ENCODE measurements at regions of chr1 and their contacts with region 1.

Region 1: GRCh38 chr1:203625628-203626019 is 1.0 kb upstream of the ATP2B4 start:
- DNase-seq: peak; percentile 33 to 88 (median 67)
- ATAC-seq: peak; percentile 61 to 72 (median 62)
- H3K4me3 ChIP-seq: peak overlapping the region; percentile 12 to 67
- H3K4me3 Mint-ChIP-seq: peak overlapping the region; percentile 91 to 99 (median 92)
- H3K27ac ChIP-seq: peak overlapping the region; percentile 87
- H3K27ac Mint-ChIP-seq: peak overlapping the region; percentile 40 to 91
- H3K4me1 ChIP-seq: peaks cover 22 to 39% of the 10 kb centered on the region in 2 experiments
- H3K4me1 Mint-ChIP-seq: peaks cover 31 to 50% (median 39%) of the 10 kb centered on the region in 3 donors
- H3K27me3 ChIP-seq: no peaks in the 10 kb centered on the region
- H3K27me3 Mint-ChIP-seq: no peaks in the 10 kb centered on the region

Region 2: GRCh38 chr1:203504397-203505250 is 121.0 kb before region 1 on chr1:
- CTCF ChIA-PET with region 1: interaction called, 3 to 14 read pairs
- POLR2A ChIA-PET with region 1: no interaction called
- DNase-seq: peak; percentile 31 to 84 (median 65)
- ATAC-seq: peak; percentile 50 to 82 (median 66)
- H3K4me3 ChIP-seq: no peak overlapping the region
- H3K4me3 Mint-ChIP-seq: no peak overlapping the region
- H3K27ac ChIP-seq: no peak overlapping the region
- H3K27ac Mint-ChIP-seq: no peak overlapping the region
- H3K4me1 ChIP-seq: peaks cover 0 to 2% of the 10 kb centered on the region in 2 experiments
- H3K4me1 Mint-ChIP-seq: peaks cover 2 to 7% (median 5%) of the 10 kb centered on the region in 3 donors
- H3K27me3 ChIP-seq: peaks cover 0 to 5% of the 10 kb centered on the region in 2 experiments
- H3K27me3 Mint-ChIP-seq: peaks cover 0 to 3% of the 10 kb centered on the region in 2 donors

Region 3: GRCh38 chr1:203649999-203650855 is 24.6 kb after region 1 on chr1:
- CTCF ChIA-PET with region 1: interaction called in 1 of 2 experiments, 53 read pairs
- POLR2A ChIA-PET with region 1: interaction called, 3 to 24 read pairs
- DNase-seq: peak in 34 of 35 experiments; percentile 10 to 81 (median 52)
- ATAC-seq: peak; percentile 65 to 82 (median 78)
- H3K4me3 ChIP-seq: peak overlapping the region; percentile 43 to 46
- H3K4me3 Mint-ChIP-seq: peak overlapping the region; percentile 71 to 83 (median 81)
- H3K27ac ChIP-seq: peak overlapping the region; percentile 89
- H3K27ac Mint-ChIP-seq: peak overlapping the region; percentile 93 to 95
- H3K4me1 ChIP-seq: peaks cover 40 to 82% of the 10 kb centered on the region in 2 experiments
- H3K4me1 Mint-ChIP-seq: peaks cover 68 to 84% (median 77%) of the 10 kb centered on the region in 3 donors
- H3K27me3 ChIP-seq: no peaks in the 10 kb centered on the region
- H3K27me3 Mint-ChIP-seq: no peaks in the 10 kb centered on the region

Region 4: DNA sequence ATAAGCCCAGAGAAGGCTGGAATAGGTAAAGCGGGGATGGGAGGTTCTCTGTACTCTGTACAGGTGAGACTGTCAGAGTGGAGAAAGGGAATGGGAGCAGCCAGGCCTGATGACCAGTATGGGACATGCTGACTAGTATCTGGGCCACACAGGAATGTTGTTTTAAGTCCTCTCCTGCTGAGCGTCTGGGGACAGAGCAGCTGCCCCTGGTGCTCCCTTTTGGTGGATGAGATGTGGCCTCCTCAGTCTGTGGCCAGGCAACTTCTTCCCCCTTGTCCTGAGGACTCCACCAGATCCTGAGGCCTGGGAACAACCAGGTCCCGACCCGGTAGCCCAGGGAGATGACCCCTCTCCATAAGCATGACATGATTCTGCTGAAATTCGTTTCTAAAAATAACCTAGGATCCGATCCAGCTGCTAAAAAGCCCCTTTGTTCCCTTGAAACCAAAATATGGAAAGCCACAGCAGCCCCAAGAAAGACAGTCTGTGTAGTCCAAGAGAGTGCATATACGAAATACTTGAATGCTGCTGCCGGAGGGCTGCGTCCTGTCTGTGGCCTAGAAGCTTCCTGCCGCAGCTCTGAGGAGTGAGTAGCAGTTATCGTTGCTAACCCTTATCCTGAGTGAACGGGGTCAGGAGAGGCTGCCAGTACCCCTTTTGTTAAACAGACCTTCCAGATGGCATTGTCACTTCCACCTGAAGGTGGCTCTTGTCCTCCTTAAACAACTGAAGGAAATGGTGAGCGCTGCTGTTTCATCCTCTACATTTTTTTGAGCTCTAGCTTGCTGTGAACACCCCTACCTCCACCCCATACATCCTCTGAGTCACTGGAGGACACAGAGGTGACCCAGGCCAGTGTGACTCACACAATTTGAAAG is 48.2 kb after region 1 on chr1:
- CTCF ChIA-PET with region 1: interaction called, 4 to 46 read pairs
- POLR2A ChIA-PET with region 1: interaction called, 3 to 11 read pairs
- DNase-seq: peak; percentile 41 to 90 (median 75)
- ATAC-seq: peak; percentile 87 to 93 (median 91)
- H3K4me3 ChIP-seq: no peak overlapping the region
- H3K4me3 Mint-ChIP-seq: peak overlapping the region; percentile 64 to 72 (median 64)
- H3K27ac ChIP-seq: peak overlapping the region; percentile 77
- H3K27ac Mint-ChIP-seq: peak overlapping the region; percentile 98 to 100
- H3K4me1 ChIP-seq: peaks cover 49 to 81% of the 10 kb centered on the region in 2 experiments
- H3K4me1 Mint-ChIP-seq: peaks cover 65 to 85% (median 75%) of the 10 kb centered on the region in 3 donors
- H3K27me3 ChIP-seq: no peaks in the 10 kb centered on the region
- H3K27me3 Mint-ChIP-seq: no peaks in the 10 kb centered on the region

Region 5: GRCh38 chr1:203692565-203693470 is 67.2 kb after region 1 on chr1:
- CTCF ChIA-PET with region 1: interaction called in 1 of 2 experiments, 14 read pairs
- POLR2A ChIA-PET with region 1: interaction called in 1 of 2 experiments, 8 read pairs
- DNase-seq: no peak
- ATAC-seq: peak in 3 of 4 experiments; percentile 40 to 49 (median 41)
- H3K4me3 ChIP-seq: no peak overlapping the region
- H3K4me3 Mint-ChIP-seq: peak overlapping the region; percentile 25 to 55 (median 31)
- H3K27ac ChIP-seq: peak overlapping the region; percentile 43
- H3K27ac Mint-ChIP-seq: peak overlapping the region; percentile 76 to 84
- H3K4me1 ChIP-seq: peaks cover 2 to 43% of the 10 kb centered on the region in 2 experiments
- H3K4me1 Mint-ChIP-seq: peaks cover 25 to 76% (median 70%) of the 10 kb centered on the region in 3 donors
- H3K27me3 ChIP-seq: no peaks in the 10 kb centered on the region
- H3K27me3 Mint-ChIP-seq: no peaks in the 10 kb centered on the region

Region 6: DNA sequence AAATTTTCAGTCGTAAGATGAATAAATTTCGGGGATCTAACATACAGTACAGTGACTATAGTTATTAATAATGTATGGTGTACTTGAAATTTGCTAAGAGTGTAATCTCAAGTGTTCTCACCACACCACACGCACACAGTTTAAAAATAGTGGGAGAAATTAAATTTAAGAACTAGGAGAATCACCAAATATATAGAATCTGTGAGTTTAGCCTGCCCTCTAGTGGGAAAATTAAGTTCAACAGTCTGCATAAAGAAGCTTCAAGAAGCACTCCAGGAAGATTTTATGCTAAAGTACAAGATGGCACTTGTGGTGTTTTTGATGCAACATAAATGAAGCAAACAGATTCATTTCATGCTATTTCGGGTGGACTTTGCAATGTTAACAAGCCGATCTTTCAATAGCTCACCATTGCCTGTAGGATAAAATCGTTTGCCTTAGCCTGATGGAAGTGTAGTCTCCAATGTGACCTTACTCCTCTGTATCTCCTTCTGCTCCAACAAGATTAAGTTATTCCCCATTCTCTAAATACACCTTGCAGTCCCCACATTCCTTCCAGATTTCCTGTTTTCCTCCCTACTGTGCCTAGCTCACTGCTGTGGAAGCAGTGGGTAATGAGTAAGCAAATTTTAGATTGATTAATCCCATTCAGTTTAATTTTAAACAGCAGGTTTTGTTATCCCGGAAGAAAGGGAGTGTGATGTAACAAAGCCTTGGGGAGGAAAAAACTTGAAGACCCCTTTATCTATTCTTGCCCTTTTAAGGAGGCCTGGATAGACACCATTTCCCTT is 877.7 kb after region 1 on chr1:
- CTCF ChIA-PET with region 1: no interaction called
- POLR2A ChIA-PET with region 1: no interaction called
- DNase-seq: peak in 5 of 35 experiments; percentile 28 to 87 (median 49)
- ATAC-seq: peak in 1 of 4 experiments; percentile 20
- H3K4me3 ChIP-seq: no peak overlapping the region
- H3K4me3 Mint-ChIP-seq: peak overlapping the region in 1 of 3 donors; percentile 1
- H3K27ac ChIP-seq: no peak overlapping the region
- H3K27ac Mint-ChIP-seq: peak overlapping the region in 1 of 2 donors; percentile 9
- H3K4me1 ChIP-seq: peaks cover 11 to 13% of the 10 kb centered on the region in 2 experiments
- H3K4me1 Mint-ChIP-seq: peaks cover 33 to 50% (median 34%) of the 10 kb centered on the region in 3 donors
- H3K27me3 ChIP-seq: no peaks in the 10 kb centered on the region
- H3K27me3 Mint-ChIP-seq: peaks cover 0 to 4% of the 10 kb centered on the region in 2 donors

Region 7: DNA sequence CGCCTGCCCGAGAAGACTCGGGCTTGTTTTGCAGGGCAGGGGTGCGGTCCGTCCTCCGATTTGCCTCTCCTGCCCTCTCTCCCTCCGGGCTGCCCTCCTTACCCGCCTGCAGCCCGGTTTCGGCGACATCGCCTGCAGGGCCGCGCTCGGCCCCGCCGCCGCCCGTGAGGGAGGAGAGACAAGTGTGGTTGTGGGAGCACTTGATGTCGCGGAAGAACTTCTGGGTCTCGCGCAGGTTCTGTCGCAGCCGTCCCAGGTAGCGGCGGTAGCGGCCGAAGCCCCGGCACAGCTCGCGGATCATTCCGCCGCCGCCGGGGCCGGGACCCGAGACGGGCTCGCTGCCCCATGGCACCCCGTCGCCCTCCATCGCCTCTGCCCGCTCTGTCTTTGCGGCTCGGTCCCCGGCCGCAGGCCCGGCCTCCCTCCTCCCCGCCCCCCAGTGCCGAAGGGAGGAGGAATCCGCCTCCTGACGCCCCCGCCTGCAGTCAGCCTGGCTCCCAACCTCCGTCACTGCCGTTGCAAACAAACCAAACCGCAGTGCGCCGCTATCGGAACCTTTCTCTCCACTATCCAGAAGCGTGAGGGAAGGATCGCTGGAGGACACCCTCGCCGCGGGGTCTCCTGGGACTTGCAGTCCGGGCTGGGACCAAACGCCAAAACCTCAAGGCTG is 1585.7 kb after region 1 on chr1 and contains the start of gene DSTYK:
- CTCF ChIA-PET with region 1: no interaction called
- POLR2A ChIA-PET with region 1: no interaction called
- DNase-seq: peak; percentile 81 to 94 (median 88)
- ATAC-seq: peak; percentile 89 to 93 (median 92)
- H3K4me3 ChIP-seq: peak within 1 kb of the TSS; percentile 87 to 97
- H3K4me3 Mint-ChIP-seq: peak within 1 kb of the TSS; percentile 95 to 97 (median 96)
- H3K27ac ChIP-seq: peak within 1 kb of the TSS; percentile 74
- H3K27ac Mint-ChIP-seq: peak within 1 kb of the TSS; percentile 98
- H3K4me1 ChIP-seq: peaks cover 7 to 25% of the 10 kb centered on the region in 2 experiments
- H3K4me1 Mint-ChIP-seq: peaks cover 36 to 52% (median 47%) of the 10 kb centered on the region in 3 donors
- H3K27me3 ChIP-seq: no peaks in the 10 kb centered on the region
- H3K27me3 Mint-ChIP-seq: no peaks in the 10 kb centered on the region
- total RNA-seq, gene DSTYK: 13.8 to 15.7 (median 14.7) TPM